Activated CD8-positive, alpha-beta T cell treated with anti-CD3 and anti-CD28 coated beads for 36 hours (primary cell): ENCODE measurements at regions of chr14 and their contacts with region 1.

Region 1: GRCh38 chr14:102086972-102087761 is at the start of gene HSP90AA1:
- DNase-seq: peak; percentile 92
- ATAC-seq: peak; percentile 71
- H3K4me3 Mint-ChIP-seq: peak within 1 kb of the TSS; percentile 92
- H3K27ac Mint-ChIP-seq: peak within 1 kb of the TSS; percentile 98
- H3K4me1 Mint-ChIP-seq: peaks cover 46% of the 10 kb centered on the region
- H3K27me3 Mint-ChIP-seq: no peaks in the 10 kb centered on the region
- CTCF ChIP-seq: no peak
- total RNA-seq, gene HSP90AA1: 1,101 to 1,115 TPM

Region 2: DNA sequence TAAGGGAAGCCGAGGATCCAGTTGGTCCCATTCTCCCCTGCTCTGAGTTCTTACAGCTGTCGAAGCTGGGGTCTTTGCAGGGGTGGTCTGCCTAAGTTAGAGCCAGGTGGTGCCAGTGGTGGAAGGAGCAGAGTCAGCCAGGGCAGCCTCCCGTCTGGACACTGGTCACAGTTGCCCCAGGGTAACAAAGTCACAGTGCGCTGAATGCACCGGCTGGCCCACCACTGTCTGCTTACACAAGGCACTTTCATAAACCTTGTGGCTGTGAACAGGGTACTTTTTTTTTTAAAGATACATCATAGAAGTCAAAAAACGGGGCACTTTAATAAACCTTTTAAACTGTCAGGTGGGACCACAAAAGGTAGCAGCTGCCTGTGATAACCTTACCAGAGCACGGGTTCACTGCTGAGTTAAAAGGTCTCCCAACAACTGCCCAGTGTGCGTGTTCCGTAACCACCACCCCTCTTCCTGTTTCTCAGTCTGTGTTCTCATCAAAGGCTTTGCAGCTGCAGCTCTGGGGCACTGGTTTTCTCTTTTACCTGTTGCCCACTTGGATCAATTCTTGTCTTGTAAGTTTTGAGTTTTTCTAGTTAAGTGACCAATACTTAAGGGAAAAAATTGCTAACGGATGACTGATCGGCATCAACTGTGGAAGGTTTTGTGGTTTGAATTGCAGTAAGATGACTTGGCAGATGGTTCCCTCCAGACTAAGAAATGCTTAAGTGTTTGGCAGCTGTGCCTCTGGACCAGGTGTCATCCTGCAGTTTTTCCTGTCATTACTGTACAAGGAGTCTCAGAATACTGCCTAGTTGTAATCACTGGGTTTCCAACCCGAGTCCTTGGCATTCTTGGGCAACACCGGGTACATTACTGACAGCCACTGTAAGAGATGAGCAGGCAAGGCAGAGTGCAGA is 66.9 kb before region 1 on chr14:
- CTCF ChIA-PET with region 1: no interaction called
- POLR2A ChIA-PET with region 1: interaction called, 4 read pairs
- intact Hi-C with region 1: loop called (anchors 10 kb)
- DNase-seq: peak; percentile 88
- ATAC-seq: peak; percentile 94
- H3K4me3 Mint-ChIP-seq: peak overlapping the region; percentile 1
- H3K27ac Mint-ChIP-seq: peak overlapping the region; percentile 75
- H3K4me1 Mint-ChIP-seq: peaks cover 23% of the 10 kb centered on the region
- H3K27me3 Mint-ChIP-seq: no peaks in the 10 kb centered on the region
- CTCF ChIP-seq: no peak

Region 3: GRCh38 chr14:102074690-102074964 is 12.5 kb before region 1 on chr14:
- CTCF ChIA-PET with region 1: no interaction called
- POLR2A ChIA-PET with region 1: interaction called, 10 read pairs
- intact Hi-C with region 1: no loop called
- DNase-seq: no peak
- ATAC-seq: no peak
- H3K4me3 Mint-ChIP-seq: no peak overlapping the region
- H3K27ac Mint-ChIP-seq: no peak overlapping the region
- H3K4me1 Mint-ChIP-seq: peaks cover 10% of the 10 kb centered on the region
- H3K27me3 Mint-ChIP-seq: no peaks in the 10 kb centered on the region
- CTCF ChIP-seq: no peak